AG04449 (cell line): ENCODE measurements at regions of chr10 and their contacts with region 1.

Region 1: DNA sequence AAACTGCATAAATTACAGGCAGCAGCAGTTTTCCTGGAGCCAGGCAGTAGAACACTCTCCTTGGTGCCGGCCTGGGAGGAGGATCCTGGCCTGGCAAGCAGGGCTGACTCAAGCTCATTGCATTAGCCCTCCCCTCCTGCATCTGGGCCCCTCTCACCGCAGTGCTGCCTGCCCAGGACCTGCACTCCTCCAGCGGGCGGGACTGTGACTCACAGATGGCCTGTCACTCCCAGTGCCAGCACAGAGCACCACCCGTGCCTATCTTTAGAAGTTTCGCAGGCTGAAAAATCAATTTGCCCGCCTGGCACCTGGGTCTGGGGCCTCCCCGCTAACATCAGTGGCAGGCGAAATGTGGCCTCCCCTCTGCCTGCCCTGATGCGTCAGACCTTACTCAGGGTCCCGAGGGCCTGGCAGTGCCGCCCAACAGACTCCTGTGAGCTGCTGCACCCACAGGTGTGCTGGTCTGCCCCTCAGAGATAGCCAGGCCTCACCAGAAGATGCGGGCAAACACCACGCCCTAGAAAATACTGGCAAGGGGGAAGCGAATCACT is 123.8 kb downstream of the KCNMA1 start:
- DNase-seq: peak; percentile 70
- H3K4me3 ChIP-seq: no peak overlapping the region
- CTCF ChIP-seq: no peak

Region 2: DNA sequence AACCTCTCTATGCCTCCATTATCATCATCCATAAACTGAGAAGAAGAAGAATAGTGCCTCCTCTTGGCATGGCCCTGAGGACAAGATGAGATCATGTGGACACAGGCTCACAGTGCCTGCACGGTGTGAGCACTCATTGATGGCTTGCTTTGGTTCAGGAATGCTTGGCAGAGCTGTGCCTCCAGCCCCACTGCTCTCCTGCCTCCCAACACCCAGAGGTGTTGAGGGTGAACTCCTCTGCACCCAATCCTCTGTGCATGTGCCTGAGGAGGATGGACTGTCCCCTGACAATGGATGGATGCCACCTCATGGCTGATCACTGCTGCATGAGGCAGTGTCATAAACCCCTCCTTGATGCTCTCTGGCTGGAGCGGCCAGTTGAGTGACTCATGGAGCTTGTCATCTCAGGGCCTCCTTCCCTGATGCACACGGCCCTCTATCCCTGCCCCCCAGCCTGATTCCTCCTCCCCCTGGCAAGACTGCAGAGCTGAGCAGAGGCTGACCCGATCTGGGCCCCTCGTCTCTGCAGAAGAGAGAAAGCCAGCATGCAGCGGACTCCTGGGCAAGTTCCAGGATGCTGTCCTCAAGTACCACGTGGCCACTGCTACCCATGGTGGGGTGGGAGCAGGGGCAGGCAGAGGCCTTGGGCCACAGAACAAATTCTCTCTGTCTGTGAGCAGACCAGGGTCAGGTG is 12.6 kb before region 1 on chr10:
- CTCF ChIA-PET with region 1: interaction called, 10 read pairs
- POLR2A ChIA-PET with region 1: interaction called, 5 read pairs
- DNase-seq: peak; percentile 82
- H3K4me3 ChIP-seq: no peak overlapping the region
- CTCF ChIP-seq: no peak

Region 3: DNA sequence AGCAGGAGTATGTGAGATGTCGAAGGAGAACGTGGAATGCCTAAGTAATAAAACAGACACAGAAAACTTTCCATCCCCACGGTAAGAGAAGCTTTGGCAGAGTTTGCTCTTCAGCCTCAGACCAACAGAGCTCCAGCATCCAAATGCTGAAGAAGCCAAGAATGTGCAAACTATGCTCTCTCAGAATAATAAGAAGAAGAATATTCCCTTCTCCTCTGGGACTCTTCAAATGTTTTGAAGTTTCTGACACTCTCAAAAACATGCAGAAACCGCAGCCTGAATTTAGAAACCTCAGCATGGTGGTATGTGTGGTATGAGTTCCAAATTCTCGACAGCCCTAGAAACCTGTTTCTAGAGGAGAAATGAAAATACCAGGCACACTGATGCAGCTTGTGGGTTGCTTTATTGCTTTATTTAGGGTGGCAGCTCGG is 10.4 kb after region 1 on chr10:
- CTCF ChIA-PET with region 1: interaction called, 15 read pairs
- POLR2A ChIA-PET with region 1: interaction called, 8 read pairs
- DNase-seq: peak; percentile 92
- H3K4me3 ChIP-seq: peak overlapping the region; percentile 4; the same call in 1 of the 2 replicates
- CTCF ChIP-seq: no peak

Region 4: GRCh38 chr10:77531441-77532001 is 17.7 kb after region 1 on chr10:
- CTCF ChIA-PET with region 1: interaction called, 3 read pairs
- POLR2A ChIA-PET with region 1: interaction called, 11 read pairs
- DNase-seq: peak; percentile 59
- H3K4me3 ChIP-seq: peak overlapping the region; percentile 39
- CTCF ChIP-seq: no peak